Activated naive CD4-positive, alpha-beta T cell treated with anti-CD3 and anti-CD28 coated beads for 36 hours (primary cell): ENCODE measurements at regions of chr12 and their contacts with region 1.

Region 1: DNA sequence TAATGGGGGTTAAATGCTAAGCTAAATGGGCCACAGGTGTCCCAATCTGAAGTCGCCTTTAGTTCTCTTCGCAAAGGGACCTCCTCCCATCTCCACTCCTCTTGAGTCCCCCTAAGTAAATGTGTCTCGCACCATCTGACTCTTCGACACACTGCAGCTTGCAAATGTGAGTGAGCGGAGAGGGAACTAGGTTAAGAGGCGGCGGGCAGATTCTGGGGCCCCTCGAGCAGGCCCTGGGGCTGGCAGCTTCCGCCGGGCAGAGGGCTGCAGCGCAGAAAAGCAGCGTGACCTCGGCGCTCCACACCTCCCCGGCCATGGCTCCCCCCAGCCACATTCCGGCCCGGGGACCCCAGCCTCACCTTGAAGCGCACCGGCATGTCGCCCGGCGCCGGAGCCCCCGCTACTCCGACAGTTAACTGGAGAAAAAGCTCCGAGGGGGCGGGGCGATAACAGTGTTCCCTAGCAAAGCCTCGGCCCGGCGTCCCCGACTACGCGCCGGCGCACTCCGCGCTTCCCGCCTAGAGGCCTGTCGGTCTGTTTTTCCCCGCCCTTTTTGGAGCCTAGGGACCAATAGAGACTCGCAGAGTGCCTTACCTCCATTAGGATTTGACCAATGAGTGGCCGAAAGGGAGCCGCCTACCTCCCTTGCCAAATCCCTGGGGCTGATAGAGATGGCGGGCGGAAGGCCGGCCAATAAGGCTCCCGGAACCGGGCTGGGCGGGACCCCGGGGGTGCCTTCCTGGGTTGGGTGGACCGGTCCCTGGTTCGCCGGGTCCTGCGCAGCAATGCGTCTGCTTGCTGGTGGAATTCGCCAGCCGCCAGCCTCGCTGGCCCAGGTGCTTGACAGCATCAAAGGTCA is at the start of gene MDM1:
- DNase-seq: peak; percentile 96
- H3K4me3 Mint-ChIP-seq: peak within 1 kb of the TSS; percentile 84
- H3K27ac Mint-ChIP-seq: peak within 1 kb of the TSS; percentile 73
- H3K4me1 Mint-ChIP-seq: peaks cover 47% of the 10 kb centered on the region
- H3K27me3 Mint-ChIP-seq: no peaks in the 10 kb centered on the region
- total RNA-seq, gene MDM1: 16.5 to 20.8 TPM

Region 2: GRCh38 chr12:68040450-68041075 is 291.5 kb before region 1 on chr12:
- CTCF ChIA-PET with region 1: interaction called, 3 read pairs
- intact Hi-C with region 1: loop called (anchors 5 kb)
- DNase-seq: peak; percentile 83
- H3K4me3 Mint-ChIP-seq: no peak overlapping the region
- H3K27ac Mint-ChIP-seq: peak overlapping the region; percentile 29
- H3K4me1 Mint-ChIP-seq: peaks cover 42% of the 10 kb centered on the region
- H3K27me3 Mint-ChIP-seq: no peaks in the 10 kb centered on the region

Region 3: GRCh38 chr12:68236421-68237059 is 95.6 kb before region 1 on chr12:
- CTCF ChIA-PET with region 1: interaction called, 4 read pairs
- intact Hi-C with region 1: loop called (anchors 1 kb)
- DNase-seq: peak; percentile 43
- H3K4me3 Mint-ChIP-seq: peak overlapping the region; percentile 75
- H3K27ac Mint-ChIP-seq: peak overlapping the region; percentile 57
- H3K4me1 Mint-ChIP-seq: peaks cover 48% of the 10 kb centered on the region
- H3K27me3 Mint-ChIP-seq: no peaks in the 10 kb centered on the region

Region 4: DNA sequence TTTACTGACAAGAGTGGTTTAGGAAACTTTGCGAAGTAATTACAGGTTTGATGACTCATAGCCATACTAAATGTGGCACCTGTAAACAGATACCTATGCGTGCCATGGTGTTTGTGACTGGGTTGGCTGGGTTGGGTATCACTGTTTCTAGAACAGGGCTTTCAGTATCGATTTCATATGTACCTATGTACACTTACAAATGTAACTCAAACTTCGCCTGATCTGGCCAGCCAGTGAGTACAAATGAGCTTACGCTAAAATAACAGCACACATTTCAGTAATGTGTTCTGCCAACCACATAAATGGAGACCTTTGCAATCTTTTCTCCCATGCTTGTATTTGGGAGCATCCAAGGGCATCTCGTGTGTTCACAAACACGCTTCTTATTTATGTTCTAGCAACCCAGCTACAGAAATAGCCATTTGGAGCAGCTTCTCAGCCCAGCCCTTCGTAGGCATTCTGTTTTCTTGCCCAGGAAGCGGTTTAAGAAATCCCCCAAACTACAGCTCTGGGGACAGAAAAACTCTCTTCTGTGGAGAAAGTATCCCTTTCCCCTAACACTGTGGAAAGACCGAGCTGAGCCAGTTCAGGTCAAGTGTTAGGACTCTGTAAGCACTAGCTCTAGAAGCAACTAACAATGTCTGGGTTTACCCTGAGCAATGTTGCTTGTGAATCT is 42.3 kb after region 1 on chr12:
- CTCF ChIA-PET with region 1: no interaction called
- intact Hi-C with region 1: loop called (anchors 1 kb)
- DNase-seq: peak; percentile 77
- H3K4me3 Mint-ChIP-seq: no peak overlapping the region
- H3K27ac Mint-ChIP-seq: peak overlapping the region; percentile 89
- H3K4me1 Mint-ChIP-seq: peaks cover 46% of the 10 kb centered on the region
- H3K27me3 Mint-ChIP-seq: peaks cover 3% of the 10 kb centered on the region

Region 5: DNA sequence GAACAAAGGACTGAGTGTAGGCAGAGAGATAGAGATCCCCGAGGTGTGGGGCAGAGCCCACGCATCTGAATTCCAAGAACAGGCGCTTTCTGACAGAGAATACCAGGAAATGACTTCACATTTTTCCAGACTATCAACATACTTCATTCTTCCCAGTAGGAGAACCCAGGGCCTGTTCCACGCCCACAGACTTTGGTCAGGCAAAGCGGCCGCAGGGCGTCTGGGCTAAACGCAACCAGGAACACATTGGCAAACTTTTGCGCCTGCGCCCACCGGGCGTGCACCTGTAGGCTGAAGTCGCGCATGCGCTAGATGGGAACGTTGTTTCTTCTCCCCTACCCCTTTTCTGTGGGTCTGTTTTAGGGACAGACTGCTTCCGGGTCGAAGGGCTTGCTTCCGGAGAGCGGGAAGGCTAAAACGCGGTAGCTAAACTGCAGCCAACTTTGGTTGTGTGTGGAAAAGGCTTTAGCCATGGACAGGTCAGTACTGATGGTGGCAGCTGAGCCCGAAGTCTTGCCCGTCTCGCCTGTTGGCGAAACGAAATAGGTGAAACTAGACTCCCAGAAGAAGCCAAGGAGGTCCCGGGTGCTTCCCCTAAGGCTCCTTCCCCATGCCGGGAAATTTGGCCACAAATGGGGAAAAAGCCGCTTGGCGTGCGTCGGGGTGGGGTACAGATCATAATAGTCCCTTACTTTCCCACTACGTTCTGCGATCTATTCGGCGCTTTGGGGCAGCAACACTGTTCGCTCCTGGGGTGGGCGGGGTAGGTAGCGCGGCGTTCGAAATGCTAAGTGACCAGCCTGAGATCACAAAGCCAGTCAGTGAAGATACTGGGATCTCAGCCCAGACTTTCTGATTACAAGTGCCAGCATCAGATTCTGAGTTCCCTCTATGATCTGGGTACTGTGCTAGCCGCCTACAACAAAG is 354.8 kb after region 1 on chr12 and contains the start of gene NUP107:
- CTCF ChIA-PET with region 1: no interaction called
- intact Hi-C with region 1: loop called (anchors 1 kb)
- DNase-seq: peak; percentile 98
- H3K4me3 Mint-ChIP-seq: peak within 1 kb of the TSS; percentile 98
- H3K27ac Mint-ChIP-seq: peak within 1 kb of the TSS; percentile 96
- H3K4me1 Mint-ChIP-seq: peaks cover 39% of the 10 kb centered on the region
- H3K27me3 Mint-ChIP-seq: no peaks in the 10 kb centered on the region
- total RNA-seq, gene NUP107: 126 to 135 TPM

Region 6: GRCh38 chr12:68792952-68793835 is 461.1 kb after region 1 on chr12:
- CTCF ChIA-PET with region 1: no interaction called
- intact Hi-C with region 1: loop called (anchors 5 kb)
- DNase-seq: peak; percentile 37
- H3K4me3 Mint-ChIP-seq: no peak overlapping the region
- H3K27ac Mint-ChIP-seq: no peak overlapping the region
- H3K4me1 Mint-ChIP-seq: no peaks in the 10 kb centered on the region
- H3K27me3 Mint-ChIP-seq: no peaks in the 10 kb centered on the region

Region 7: GRCh38 chr12:68932961-68933893 is 601.1 kb after region 1 on chr12 and contains the start of gene CPM:
- CTCF ChIA-PET with region 1: no interaction called
- intact Hi-C with region 1: loop called (anchors 5 kb)
- DNase-seq: peak; percentile 76
- H3K4me3 Mint-ChIP-seq: peak within 1 kb of the TSS; percentile 82
- H3K27ac Mint-ChIP-seq: peak within 1 kb of the TSS; percentile 58
- H3K4me1 Mint-ChIP-seq: peaks cover 21% of the 10 kb centered on the region
- H3K27me3 Mint-ChIP-seq: peaks cover 22% of the 10 kb centered on the region
- total RNA-seq, gene CPM: 50.5 to 55.1 TPM